RWPE1 (cell line): ENCODE measurements at regions of chr17 and their contacts with region 1.

Region 1: GRCh38 chr17:38349097-38349730 is 2.4 kb upstream of the SOCS7 start:
- DNase-seq: peak; percentile 56
- H3K27ac ChIP-seq: no peak overlapping the region
- CTCF ChIP-seq: peak; percentile 93

Region 2: DNA sequence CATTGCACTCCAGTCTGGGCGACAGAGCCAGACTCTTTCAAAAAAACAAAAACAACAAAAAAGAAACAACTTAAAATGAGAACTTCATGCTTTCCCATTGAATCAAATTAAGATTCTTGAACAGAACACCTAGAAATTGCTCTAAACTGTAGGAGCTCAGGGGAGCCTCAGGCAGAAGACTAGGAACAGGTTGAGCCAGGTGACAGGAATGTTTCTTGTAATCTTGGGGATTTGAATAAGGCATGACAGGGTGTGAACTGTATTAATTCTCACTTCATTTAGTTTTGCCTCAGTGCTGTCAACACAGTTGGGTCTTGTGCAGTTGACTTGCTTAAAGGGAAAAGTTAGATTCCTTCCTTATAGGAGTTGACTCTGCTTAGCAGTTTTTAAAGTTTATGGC is 30.2 kb after region 1 on chr17:
- CTCF ChIA-PET with region 1: interaction called, 11 read pairs
- POLR2A ChIA-PET with region 1: no interaction called
- DNase-seq: no peak
- H3K27ac ChIP-seq: no peak overlapping the region
- CTCF ChIP-seq: no peak

Region 3: GRCh38 chr17:38415250-38416194 is 66.3 kb after region 1 on chr17:
- CTCF ChIA-PET with region 1: interaction called, 34 read pairs
- POLR2A ChIA-PET with region 1: no interaction called
- DNase-seq: peak; percentile 34
- H3K27ac ChIP-seq: peak overlapping the region; percentile 72
- CTCF ChIP-seq: no peak